ENCODE measurements at regions of chr14 and their contacts with region 1.

Region 1: DNA sequence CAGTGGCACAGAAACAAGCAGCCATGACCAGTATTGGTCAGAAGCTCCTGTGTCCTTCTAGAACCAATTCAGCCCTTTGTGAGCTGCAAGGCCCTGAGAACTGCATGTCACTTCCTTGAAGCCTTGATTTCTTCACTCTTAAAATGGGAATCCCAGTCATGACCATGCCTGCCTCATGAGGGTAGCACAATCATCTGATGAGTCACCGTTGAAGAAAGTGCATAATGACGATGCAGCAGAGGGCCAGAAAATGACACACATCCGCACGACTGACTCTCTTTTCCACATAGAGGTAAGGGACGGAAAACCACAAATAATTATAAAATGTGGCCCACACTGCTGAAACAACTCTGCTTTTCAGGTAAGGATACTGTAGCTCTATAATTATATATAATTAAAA is 777.4 kb downstream of the BCL11B start:
- DNase-seq: no peak
- ATAC-seq: no peak
- H3K4me3 ChIP-seq: no peak overlapping the region
- H3K4me3 Mint-ChIP-seq: no peak overlapping the region
- H3K27ac ChIP-seq: no peak overlapping the region
- H3K27ac Mint-ChIP-seq: no peak overlapping the region
- H3K4me1 ChIP-seq: no peaks in the 10 kb centered on the region
- H3K4me1 Mint-ChIP-seq: peaks cover 0 to 31% (median 8%) of the 10 kb centered on the region in 7 donors
- H3K27me3 ChIP-seq: no peaks in the 10 kb centered on the region
- H3K27me3 Mint-ChIP-seq: no peaks in the 10 kb centered on the region

Region 2: DNA sequence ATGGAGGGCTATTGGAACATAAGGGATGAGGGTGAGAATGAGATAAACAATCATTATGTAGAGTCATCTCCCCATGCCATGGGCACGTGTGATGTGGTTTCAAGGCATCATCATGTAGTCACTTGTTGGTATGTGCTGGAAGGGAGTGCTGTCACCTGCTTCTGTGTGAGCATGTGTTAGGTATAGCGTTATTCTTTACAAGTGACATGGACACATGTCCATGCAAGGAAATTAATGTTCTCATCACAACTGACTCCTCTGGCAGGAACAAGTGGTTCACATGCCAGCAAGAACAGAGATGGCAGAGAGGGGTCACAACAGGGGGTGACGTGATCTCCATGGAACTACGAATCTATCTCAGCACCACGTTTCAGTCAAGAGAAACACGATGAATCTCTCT is 38.4 kb before region 1 on chr14:
- CTCF ChIA-PET with region 1: no interaction called
- POLR2A ChIA-PET with region 1: no interaction called
- intact Hi-C with region 1: loop called in 1 of 2 experiments (anchors 1 kb)
- DNase-seq: no peak
- ATAC-seq: no peak
- H3K4me3 ChIP-seq: no peak overlapping the region
- H3K4me3 Mint-ChIP-seq: no peak overlapping the region
- H3K27ac ChIP-seq: no peak overlapping the region
- H3K27ac Mint-ChIP-seq: peak overlapping the region in 1 of 9 donors; percentile 23
- H3K4me1 ChIP-seq: no peaks in the 10 kb centered on the region
- H3K4me1 Mint-ChIP-seq: peaks cover 0 to 29% (median 7%) of the 10 kb centered on the region in 7 donors
- H3K27me3 ChIP-seq: no peaks in the 10 kb centered on the region
- H3K27me3 Mint-ChIP-seq: no peaks in the 10 kb centered on the region

Region 3: GRCh38 chr14:98477935-98478334 is 16.6 kb before region 1 on chr14:
- CTCF ChIA-PET with region 1: no interaction called
- POLR2A ChIA-PET with region 1: interaction called, 4 read pairs
- intact Hi-C with region 1: loop called in 1 of 2 experiments (anchors 1 kb)
- DNase-seq: no peak
- ATAC-seq: no peak
- H3K4me3 ChIP-seq: no peak overlapping the region
- H3K4me3 Mint-ChIP-seq: no peak overlapping the region
- H3K27ac ChIP-seq: no peak overlapping the region
- H3K27ac Mint-ChIP-seq: peak overlapping the region in 1 of 9 donors; percentile 46
- H3K4me1 ChIP-seq: no peaks in the 10 kb centered on the region
- H3K4me1 Mint-ChIP-seq: no peaks in the 10 kb centered on the region
- H3K27me3 ChIP-seq: no peaks in the 10 kb centered on the region
- H3K27me3 Mint-ChIP-seq: peaks cover 0 to 3% (median 0%) of the 10 kb centered on the region in 5 donors

Region 4: GRCh38 chr14:98819132-98819866 is 324.7 kb after region 1 on chr14:
- CTCF ChIA-PET with region 1: no interaction called
- POLR2A ChIA-PET with region 1: no interaction called
- intact Hi-C with region 1: no loop called
- DNase-seq: no peak
- ATAC-seq: no peak
- H3K4me3 ChIP-seq: no peak overlapping the region
- H3K4me3 Mint-ChIP-seq: no peak overlapping the region
- H3K27ac ChIP-seq: no peak overlapping the region
- H3K27ac Mint-ChIP-seq: peak overlapping the region in 1 of 9 donors; percentile 5
- H3K4me1 ChIP-seq: no peaks in the 10 kb centered on the region
- H3K4me1 Mint-ChIP-seq: peaks cover 0 to 29% (median 9%) of the 10 kb centered on the region in 7 donors
- H3K27me3 ChIP-seq: no peaks in the 10 kb centered on the region
- H3K27me3 Mint-ChIP-seq: peaks cover 0 to 3% (median 0%) of the 10 kb centered on the region in 5 donors

Measured in naive thymus-derived CD4-positive, alpha-beta T cell (primary cell).